ENCODE measurements at regions of chr3 and their contacts with region 1.

Region 1: DNA sequence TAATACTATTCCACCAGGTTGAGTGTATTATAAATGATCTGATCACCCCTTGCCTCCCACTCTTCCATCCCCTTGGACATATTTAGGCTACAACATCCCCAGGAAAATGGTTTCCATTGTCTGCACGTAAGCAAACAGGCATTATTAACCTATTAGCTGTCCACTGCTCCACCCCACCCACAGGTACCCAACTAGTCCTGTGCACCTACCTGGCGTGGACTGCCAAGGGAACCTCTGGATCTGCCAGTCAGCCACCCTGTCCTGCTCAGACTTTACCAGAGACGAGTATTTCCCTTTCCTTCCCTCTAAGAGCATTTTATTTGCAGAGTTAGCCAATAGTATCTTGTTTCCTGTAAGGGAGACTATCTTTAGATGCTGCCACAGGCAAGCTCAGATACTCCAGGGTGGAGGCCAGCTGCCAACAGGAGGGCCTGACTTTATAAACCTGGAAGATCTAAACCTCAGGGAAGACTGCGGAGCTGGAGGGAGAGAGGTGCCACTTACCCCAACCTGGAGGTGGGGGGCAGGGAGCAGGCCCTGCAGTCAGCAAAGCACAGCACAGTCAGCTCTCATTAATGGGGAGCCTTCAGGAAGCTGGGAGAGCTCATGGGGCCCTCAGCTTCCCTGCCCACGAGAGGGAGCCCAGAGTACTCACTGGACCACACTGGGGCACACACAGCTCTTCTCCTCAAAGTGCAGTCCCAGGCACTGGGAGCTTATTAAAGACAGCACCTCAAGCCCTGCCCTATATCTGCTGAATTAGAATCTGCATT is at the start of gene CX3CR1:
- DNase-seq: no peak
- total RNA-seq, gene CX3CR1: 1.3 TPM

Region 2: DNA sequence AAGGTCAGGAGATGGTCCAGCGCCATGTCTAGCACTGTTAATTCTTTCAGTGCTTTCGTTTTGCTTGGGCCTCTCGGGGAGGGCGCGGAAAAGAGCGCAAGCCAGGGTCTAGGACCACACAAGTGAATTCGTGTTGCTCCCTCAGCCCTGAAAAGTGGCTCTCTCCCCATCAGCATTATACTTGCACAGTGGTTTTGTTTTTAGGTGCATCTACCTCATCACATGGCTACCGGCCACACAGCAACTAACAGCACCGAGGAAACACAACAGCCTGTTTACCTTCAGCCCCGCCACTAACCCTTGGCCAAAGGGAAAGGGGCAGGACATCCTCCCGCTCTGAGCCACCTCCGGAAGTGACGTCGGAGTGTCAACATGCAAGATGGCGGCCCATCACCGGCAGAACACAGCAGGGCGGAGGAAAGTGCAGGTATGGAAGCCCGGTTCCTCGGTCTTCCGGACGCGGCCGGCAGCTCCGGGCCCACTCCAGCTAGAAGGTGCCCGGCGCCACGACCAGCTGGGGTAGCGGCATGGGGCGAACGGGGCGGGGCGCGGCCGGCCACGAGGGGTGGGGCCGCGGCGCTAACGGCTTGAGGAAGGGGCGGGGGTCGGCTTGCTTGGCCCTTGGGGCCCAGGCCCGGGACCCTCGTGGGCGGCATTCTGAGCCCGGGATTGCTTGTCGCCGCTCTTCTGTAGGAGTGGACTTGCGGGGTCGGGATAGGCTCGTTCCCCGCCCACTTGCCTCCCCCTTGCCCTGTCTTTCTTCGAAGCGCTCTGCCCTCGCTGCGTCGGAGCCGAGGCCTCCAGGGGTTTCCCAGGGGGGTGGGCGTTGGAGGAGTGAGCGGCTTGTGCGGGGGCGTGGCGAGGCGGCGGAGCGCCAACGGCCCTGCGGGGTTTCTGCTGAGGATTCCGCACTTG is 228.0 kb before region 1 on chr3 and contains the starts of genes SCN11A and WDR48:
- intact Hi-C with region 1: no loop called
- DNase-seq: peak; percentile 98
- total RNA-seq, gene SCN11A: 0.05 TPM
- total RNA-seq, gene WDR48: 24.5 TPM

Region 3: GRCh38 chr3:39208463-39209055 is 71.4 kb before region 1 on chr3:
- intact Hi-C with region 1: loop called (anchors 2 kb)
- DNase-seq: peak; percentile 84

Region 4: DNA sequence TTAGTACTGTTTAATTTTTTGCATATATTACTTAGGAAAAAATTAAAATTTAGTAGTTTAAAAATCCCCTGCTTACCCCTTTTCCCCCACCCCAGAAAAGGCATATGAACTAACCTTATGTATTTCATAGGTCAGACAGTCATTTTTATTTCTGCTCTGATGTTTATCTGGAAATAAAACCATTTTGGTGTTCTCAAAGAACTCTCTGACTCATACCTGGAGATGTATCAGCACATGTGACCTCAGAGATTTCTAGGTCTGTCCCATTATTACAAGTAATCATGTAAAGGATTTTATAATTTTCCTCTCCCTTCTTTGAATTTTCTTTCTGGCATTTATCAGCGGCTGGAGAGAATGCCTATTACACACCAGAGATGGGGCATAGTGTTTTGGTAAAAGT is 35.5 kb after region 1 on chr3:
- intact Hi-C with region 1: no loop called
- DNase-seq: no peak

Measured in cardiac septum (tissue), 1 donor.